ENCODE measurements at regions of chr1 and their contacts with region 1.

Region 1: GRCh38 chr1:109263597-109264398 is 14.5 kb downstream of the CELSR2 start:
- DNase-seq: peak; percentile 93
- ATAC-seq: peak; percentile 99
- H3K4me3 ChIP-seq: no peak overlapping the region
- H3K27ac ChIP-seq: no peak overlapping the region
- H3K4me1 ChIP-seq: no peaks in the 10 kb centered on the region
- H3K27me3 ChIP-seq: no peaks in the 10 kb centered on the region
- CTCF ChIP-seq: peak; percentile 99
- EP300 ChIP-seq: no peak
- POLR2A ChIP-seq: no peak
- RAD21 ChIP-seq: peak; percentile 99

Region 2: GRCh38 chr1:109090196-109091077 is 173.4 kb before region 1 on chr1 and contains the start of gene TMEM167B:
- CTCF ChIA-PET with region 1: interaction called, 8 read pairs
- POLR2A ChIA-PET with region 1: no interaction called
- in situ Hi-C with region 1: no loop called
- intact Hi-C with region 1: loop called (anchors 5 kb)
- DNase-seq: peak; percentile 84
- ATAC-seq: peak; percentile 88
- H3K4me3 ChIP-seq: peak within 1 kb of the TSS; percentile 83 to 86 (median 85)
- H3K27ac ChIP-seq: peak within 1 kb of the TSS; percentile 90
- H3K4me1 ChIP-seq: peaks cover 30% of the 10 kb centered on the region
- H3K27me3 ChIP-seq: no peaks in the 10 kb centered on the region; a peak in 1 of 5 replicates
- CTCF ChIP-seq: peak; percentile 27; the same call in 1 of the 2 replicates
- EP300 ChIP-seq: peak; percentile 36 to 40; a peak in 2 of 4 replicates
- POLR2A ChIP-seq: peak in 1 of 2 experiments; percentile 71; a peak in 2 of 4 replicates
- RAD21 ChIP-seq: no peak
- total RNA-seq, gene TMEM167B: 22.4 and 24.4 TPM in 2 replicates

Region 3: GRCh38 chr1:109239580-109240095 is 24.2 kb before region 1 on chr1:
- CTCF ChIA-PET with region 1: interaction called, 13 read pairs
- POLR2A ChIA-PET with region 1: interaction called, 3 read pairs
- in situ Hi-C with region 1: no loop called
- intact Hi-C with region 1: loop called (anchors 1 kb)
- DNase-seq: peak; percentile 66
- ATAC-seq: peak; percentile 94
- H3K4me3 ChIP-seq: no peak overlapping the region
- H3K27ac ChIP-seq: peak overlapping the region; percentile 20
- H3K4me1 ChIP-seq: peaks cover 38% of the 10 kb centered on the region
- H3K27me3 ChIP-seq: 0 out of 5 replicates have a peak, but pooled peaks cover 0 to 3% of the 10 kb centered on the region in 2 experiments
- CTCF ChIP-seq: peak; percentile 83
- EP300 ChIP-seq: no peak
- POLR2A ChIP-seq: no peak
- RAD21 ChIP-seq: peak; percentile 63

Region 4: GRCh38 chr1:109282952-109283747 is 19.4 kb after region 1 on chr1 and contains the start of gene PSRC1:
- CTCF ChIA-PET with region 1: interaction called, 8 read pairs
- POLR2A ChIA-PET with region 1: no interaction called
- in situ Hi-C with region 1: no loop called
- intact Hi-C with region 1: loop called (anchors 2 kb)
- DNase-seq: peak; percentile 90
- ATAC-seq: peak; percentile 95
- H3K4me3 ChIP-seq: peak within 1 kb of the TSS; percentile 75 to 99 (median 93)
- H3K27ac ChIP-seq: peak within 1 kb of the TSS; percentile 85
- H3K4me1 ChIP-seq: peaks cover 52% of the 10 kb centered on the region
- H3K27me3 ChIP-seq: no peaks in the 10 kb centered on the region; a peak in 1 of 5 replicates
- CTCF ChIP-seq: peak; percentile 59
- EP300 ChIP-seq: 0 out of 4 replicates have a peak, but pooled peaks of 1 of the 2 experiments have one; percentile 10
- POLR2A ChIP-seq: peak; percentile 79 to 92
- RAD21 ChIP-seq: peak; percentile 73
- total RNA-seq, gene PSRC1: 26.5 and 28.6 TPM in 2 replicates

Region 5: GRCh38 chr1:109426278-109427170 is 162.7 kb after region 1 on chr1 and contains the start of gene PSMA5:
- CTCF ChIA-PET with region 1: no interaction called
- POLR2A ChIA-PET with region 1: no interaction called
- in situ Hi-C with region 1: no loop called
- intact Hi-C with region 1: no loop called
- DNase-seq: peak; percentile 99
- ATAC-seq: peak; percentile 97
- H3K4me3 ChIP-seq: peak within 1 kb of the TSS; percentile 84 to 90 (median 84)
- H3K27ac ChIP-seq: peak within 1 kb of the TSS; percentile 93
- H3K4me1 ChIP-seq: peaks cover 45% of the 10 kb centered on the region
- H3K27me3 ChIP-seq: no peaks in the 10 kb centered on the region; a peak in 1 of 5 replicates
- CTCF ChIP-seq: 0 out of 2 replicates have a peak, but pooled peaks have one; percentile 2
- EP300 ChIP-seq: no peak; a peak in 1 of 4 replicates
- POLR2A ChIP-seq: peak; percentile 97
- RAD21 ChIP-seq: peak; percentile 60
- total RNA-seq, gene PSMA5: 169 and 261 TPM in 2 replicates

Region 6: DNA sequence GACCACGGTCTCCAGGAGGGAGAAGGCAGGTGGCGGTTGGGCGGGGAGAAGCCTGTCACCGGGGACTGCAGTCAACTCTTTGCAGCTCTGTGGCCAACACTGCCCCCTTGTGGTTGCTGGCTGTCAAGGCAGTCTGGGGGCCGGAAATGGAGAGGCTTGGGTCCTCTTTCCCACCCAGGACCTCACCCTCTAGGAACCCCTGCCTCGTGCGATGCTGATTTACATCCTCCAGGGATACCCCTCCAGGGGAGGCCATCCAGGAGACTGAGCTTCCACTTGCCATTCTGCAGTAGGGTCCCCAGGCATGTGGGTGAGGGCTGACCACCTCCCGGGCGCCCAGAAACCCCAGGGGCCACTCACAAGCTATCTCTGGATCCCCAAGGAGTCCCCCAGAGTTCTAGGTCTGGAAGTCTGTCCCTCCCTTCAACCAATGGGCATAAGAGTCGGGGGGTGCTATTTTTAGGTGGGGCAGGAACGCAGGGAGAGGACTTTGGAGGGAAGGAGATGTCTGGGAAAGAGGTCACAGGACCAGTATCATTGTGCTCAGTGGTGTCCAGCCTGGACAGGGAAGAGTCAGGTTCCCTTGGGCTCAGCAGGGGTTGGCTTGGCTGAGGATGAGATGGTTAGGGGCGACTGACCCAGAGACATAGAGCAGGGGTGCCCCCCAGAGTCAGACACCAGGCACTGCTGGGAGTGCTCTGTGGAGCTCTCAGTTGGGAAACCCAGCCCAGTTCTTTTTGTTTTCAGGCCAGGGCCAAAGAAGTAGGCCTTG is 268.8 kb after region 1 on chr1:
- CTCF ChIA-PET with region 1: interaction called, 8 read pairs
- POLR2A ChIA-PET with region 1: no interaction called
- in situ Hi-C with region 1: loop called (anchors 10 kb)
- intact Hi-C with region 1: no loop called
- DNase-seq: peak; percentile 75
- ATAC-seq: peak; percentile 86
- H3K4me3 ChIP-seq: peak overlapping the region in 2 of 3 experiments; percentile 29 to 67; a peak in 2 of 6 replicates
- H3K27ac ChIP-seq: no peak overlapping the region
- H3K4me1 ChIP-seq: peaks cover 19% of the 10 kb centered on the region; the same call in 1 of the 2 replicates
- H3K27me3 ChIP-seq: peaks cover 8 to 46% of the 10 kb centered on the region in 2 experiments; a peak in 4 of 5 replicates
- CTCF ChIP-seq: peak; percentile 96
- EP300 ChIP-seq: no peak
- POLR2A ChIP-seq: no peak
- RAD21 ChIP-seq: peak; percentile 83

Measured in HepG2 (cell line).